ENCODE measurements at regions of chr7 and their contacts with region 1.

Region 1: DNA sequence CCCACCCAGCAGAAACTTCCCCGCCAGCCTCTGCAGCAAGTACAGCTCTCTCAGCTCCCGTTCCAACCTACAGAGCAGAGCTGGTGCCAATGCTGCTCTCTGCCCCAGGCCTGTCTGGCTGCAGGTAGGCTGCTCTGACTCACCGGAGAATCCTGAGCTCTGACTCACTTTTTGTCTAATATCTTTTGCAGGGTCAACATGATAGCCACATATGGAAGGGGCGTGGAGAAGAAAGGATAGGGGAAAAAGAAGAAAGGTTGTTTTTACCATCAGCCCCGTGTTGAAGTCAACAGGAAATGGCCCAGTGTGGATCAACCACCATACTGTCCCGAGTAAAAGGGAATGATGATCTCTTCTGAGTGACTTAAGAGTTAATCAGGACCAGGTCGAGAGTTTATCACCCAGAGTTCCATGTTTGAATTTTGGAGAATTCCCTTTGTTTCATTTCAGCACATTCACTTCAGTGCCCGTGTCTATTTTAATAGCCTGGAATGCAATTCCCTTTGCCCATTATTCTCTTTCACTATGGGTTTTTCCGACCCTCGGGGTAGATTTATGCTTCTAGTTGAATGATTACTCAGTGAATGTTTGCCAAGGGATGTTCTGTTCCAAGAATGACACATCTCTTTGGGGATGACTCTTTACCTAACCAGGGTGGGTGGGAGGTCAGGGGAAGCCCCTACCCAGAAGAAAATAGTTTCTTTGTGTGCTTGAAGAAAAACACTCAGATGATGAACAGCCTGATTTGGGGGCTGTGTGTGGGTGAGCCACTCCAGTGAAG is 595.0 kb downstream of the INHBA start:
- DNase-seq: peak; percentile 98
- ATAC-seq: peak; percentile 92
- H3K4me3 ChIP-seq: peak overlapping the region; percentile 48; the same call in 1 of the 2 replicates
- H3K27ac ChIP-seq: peak overlapping the region; percentile 100
- H3K4me1 ChIP-seq: peaks cover 51% of the 10 kb centered on the region
- H3K27me3 ChIP-seq: no peaks in the 10 kb centered on the region
- CTCF ChIP-seq: no peak

Region 2: DNA sequence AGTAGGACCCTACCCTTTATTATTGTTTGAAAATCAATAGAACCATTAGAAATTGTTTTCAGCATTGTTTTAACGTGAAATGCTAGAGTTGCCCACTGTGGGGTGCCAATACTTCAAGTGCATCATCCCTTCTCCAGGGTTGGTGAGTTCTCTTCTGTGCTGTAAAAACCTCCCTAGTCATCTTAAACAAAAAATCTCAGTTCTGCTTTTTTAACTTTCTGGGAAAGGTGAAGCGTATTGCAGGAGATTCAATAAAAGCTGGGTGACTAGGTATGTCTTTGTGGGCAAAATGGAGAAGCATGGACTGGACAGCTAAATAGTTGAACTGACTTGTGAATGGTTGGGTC is 274.0 kb before region 1 on chr7:
- CTCF ChIA-PET with region 1: no interaction called
- POLR2A ChIA-PET with region 1: no interaction called
- intact Hi-C with region 1: loop called (anchors 1 kb)
- DNase-seq: peak; percentile 42
- ATAC-seq: peak; percentile 58; the same call in 1 of the 2 replicates
- H3K4me3 ChIP-seq: no peak overlapping the region
- H3K27ac ChIP-seq: peak overlapping the region; percentile 9; the same call in 1 of the 2 replicates
- H3K4me1 ChIP-seq: peaks cover 18% of the 10 kb centered on the region
- H3K27me3 ChIP-seq: no peaks in the 10 kb centered on the region
- CTCF ChIP-seq: peak; percentile 59

Region 3: DNA sequence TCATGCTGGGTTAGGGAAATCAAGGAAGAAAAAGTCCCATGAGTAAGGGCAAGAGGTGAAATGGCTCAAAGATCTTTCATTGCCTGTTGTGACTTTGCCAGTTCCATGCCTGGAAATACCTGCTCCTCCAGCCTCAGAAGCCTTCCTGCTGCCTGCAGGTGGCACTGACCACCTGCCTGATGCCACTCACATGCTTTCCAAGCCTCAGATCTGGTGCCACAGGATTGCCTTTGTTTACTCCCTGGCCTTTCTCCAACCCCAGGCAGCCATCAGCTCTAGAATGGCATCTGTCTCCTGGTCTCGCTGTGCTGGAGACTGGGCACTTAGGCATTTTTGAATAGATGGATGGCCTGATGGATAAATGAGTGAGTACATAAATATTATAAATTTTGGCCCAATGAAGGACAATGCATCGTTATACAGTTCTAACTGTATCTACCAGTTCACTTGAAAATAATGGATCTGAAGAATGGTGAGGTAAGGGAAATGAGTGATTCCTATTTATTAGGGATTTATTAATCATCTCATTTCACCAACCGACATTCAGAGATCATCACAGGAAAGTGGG is 62.2 kb before region 1 on chr7:
- CTCF ChIA-PET with region 1: no interaction called
- POLR2A ChIA-PET with region 1: no interaction called
- intact Hi-C with region 1: loop called (anchors 2 kb)
- DNase-seq: peak; percentile 87
- ATAC-seq: peak; percentile 76
- H3K4me3 ChIP-seq: no peak overlapping the region
- H3K27ac ChIP-seq: peak overlapping the region; percentile 96
- H3K4me1 ChIP-seq: peaks cover 37% of the 10 kb centered on the region
- H3K27me3 ChIP-seq: no peaks in the 10 kb centered on the region
- CTCF ChIP-seq: peak; percentile 83

Region 4: DNA sequence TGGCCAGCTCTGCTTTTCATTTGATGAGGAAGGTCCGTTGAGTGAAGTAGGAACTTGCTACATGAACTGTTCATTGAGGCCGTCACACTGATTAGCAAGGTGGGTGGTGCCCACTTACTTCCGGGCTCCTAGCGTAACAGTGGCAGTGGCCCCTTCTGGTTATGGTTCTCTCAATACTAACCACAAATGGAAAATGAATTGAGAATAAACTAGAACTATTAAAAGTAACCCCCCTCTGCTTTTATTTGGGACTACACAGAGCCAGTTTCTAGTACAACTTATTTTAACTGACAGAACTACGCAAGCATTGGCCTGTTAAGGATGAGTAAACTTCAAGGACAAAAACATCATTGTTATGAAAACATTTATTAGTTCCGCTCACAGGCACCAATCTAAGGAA is 75.9 kb after region 1 on chr7:
- CTCF ChIA-PET with region 1: no interaction called
- POLR2A ChIA-PET with region 1: interaction called, 5 read pairs
- intact Hi-C with region 1: loop called (anchors 1 kb)
- DNase-seq: peak; percentile 86
- ATAC-seq: peak; percentile 62
- H3K4me3 ChIP-seq: no peak overlapping the region
- H3K27ac ChIP-seq: peak overlapping the region; percentile 99
- H3K4me1 ChIP-seq: peaks cover 61% of the 10 kb centered on the region
- H3K27me3 ChIP-seq: no peaks in the 10 kb centered on the region
- CTCF ChIP-seq: 0 out of 2 replicates have a peak, but pooled peaks have one; percentile 17

Region 5: GRCh38 chr7:41247143-41247865 is 139.4 kb after region 1 on chr7:
- CTCF ChIA-PET with region 1: no interaction called
- POLR2A ChIA-PET with region 1: no interaction called
- intact Hi-C with region 1: loop called (anchors 1 kb)
- DNase-seq: peak; percentile 96
- ATAC-seq: peak; percentile 92
- H3K4me3 ChIP-seq: no peak overlapping the region
- H3K27ac ChIP-seq: peak overlapping the region; percentile 97
- H3K4me1 ChIP-seq: peaks cover 38% of the 10 kb centered on the region
- H3K27me3 ChIP-seq: no peaks in the 10 kb centered on the region
- CTCF ChIP-seq: no peak